GM13977 (cell line): ENCODE measurements at regions of chr4 and their contacts with region 1.

Region 1: DNA sequence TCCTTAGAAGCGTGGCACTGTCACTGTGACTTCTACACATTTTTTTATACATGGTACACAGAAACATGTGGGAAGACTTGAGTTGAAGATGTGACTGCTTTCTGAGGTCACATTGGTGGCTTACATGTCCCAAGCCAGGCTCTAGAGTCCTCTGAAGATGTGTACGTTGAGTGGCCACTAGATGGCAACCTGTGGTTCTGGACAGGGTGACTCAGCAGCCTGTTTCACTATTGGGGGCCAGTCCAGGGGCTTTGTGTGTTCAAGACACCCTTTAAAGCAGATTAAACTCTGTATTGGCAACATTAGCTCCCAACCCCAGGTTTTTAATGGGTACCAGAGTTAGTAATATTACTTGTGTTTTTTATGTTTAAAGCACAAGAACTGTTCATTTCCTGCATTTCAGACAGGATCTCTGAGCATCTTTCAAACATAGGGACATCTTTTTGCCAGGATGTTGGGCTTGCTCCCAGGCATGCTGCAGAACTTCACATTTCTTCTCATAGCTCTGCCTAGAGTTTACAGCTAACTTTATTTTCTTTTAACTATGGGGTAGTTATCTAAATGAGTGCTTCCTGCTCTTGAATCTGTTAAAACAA is 53.0 kb downstream of the DCUN1D4 start:
- DNase-seq: peak; percentile 68
- CTCF ChIP-seq: peak; percentile 84

Region 2: GRCh38 chr4:52028969-52029368 is 133.1 kb after region 1 on chr4:
- in situ Hi-C with region 1: loop called (anchors 10 kb)
- DNase-seq: no peak
- CTCF ChIP-seq: no peak

Region 3: DNA sequence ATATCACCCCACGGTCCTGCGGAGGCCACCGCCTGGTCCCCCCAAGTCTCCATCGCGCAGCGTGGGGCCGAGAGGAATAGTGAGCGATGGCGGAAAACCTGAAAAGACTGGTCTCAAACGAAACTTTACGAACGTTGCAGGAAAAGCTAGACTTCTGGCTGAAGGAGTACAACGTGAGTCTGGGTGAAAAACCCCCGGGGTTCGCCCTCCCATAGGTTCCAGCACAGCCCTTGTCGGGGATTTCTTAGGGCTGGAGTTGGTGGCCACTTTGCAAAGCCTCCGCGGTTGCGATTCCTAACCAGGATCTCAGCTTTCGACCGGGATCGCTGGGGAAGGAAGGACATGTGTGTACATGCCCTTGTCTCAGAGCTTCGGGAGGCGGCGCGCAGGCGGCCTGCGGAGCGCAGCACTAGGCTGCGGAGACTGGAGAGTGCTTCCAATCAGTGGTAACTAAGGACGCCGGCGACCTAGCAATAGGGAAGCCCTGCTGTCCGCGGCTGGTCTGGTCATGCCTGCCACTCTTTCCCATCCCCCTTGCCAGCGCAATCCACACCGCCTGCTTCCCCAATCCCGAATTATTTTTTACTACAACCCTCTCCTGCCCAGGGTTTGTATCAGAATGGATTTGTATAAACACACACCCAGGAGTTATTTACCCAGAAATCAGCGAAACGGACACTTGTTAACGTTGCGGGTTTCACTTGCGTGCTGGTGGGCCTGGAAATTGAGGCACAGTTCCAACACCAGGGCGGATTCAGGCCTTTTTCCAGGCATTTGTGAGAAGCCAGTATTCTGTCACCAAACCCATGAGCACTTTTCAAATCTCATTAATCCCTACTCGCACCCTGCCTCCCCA is 155.9 kb after region 1 on chr4:
- in situ Hi-C with region 1: no loop called
- DNase-seq: peak; percentile 75
- CTCF ChIP-seq: no peak